Ascending aorta (tissue), 2 donors: ENCODE measurements at regions of chr6 and their contacts with region 1.

Region 1: DNA sequence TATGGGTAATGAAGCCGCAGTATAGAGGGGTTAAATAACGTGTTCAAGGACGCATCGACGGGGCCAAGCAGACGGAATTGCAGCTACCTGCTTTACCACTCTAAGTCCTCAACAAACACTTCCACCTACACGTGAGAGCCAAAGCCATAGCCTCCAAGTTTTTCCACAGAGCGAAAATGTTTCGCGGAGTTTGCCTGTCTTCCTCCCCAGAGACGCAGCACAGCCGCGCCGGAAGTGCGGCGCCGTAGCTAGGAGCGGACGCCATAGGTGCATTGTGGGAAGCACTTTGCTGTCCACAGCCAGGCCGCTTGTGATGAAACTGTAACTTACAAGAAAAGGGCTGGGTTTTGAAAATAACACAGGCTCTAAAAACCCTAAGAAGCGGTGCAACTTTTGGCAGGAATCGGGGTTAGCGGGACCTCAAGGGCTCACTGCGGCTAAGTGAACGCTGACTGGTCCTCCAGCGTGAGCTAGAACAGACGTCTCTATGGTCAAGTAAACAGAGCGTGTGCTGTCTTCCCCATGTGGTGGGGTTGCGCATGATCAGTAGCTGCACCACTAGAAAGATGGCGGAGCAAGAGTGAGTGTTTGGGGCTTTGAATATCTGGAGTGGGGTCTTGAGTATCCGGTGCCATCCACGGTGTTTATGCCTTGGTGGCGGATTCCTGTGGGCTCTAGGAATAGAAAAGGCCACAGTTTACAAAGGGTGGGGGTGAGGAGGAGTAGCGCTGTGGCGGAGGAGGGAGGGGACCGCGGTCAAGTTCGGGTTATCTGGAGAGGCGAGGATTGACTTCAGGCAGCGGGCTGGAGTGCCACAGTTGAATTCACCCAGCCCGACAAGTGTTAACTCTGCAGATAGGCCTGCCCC is at the start of gene RPL7L1:
- DNase-seq: peak; percentile 42 to 89
- H3K4me3 ChIP-seq: peak within 1 kb of the TSS; percentile 65 to 66
- H3K27ac ChIP-seq: peak within 1 kb of the TSS; percentile 85 to 95
- H3K4me1 ChIP-seq: peaks cover 5 to 18% of the 10 kb centered on the region in 2 donors
- H3K27me3 ChIP-seq: no peaks in the 10 kb centered on the region
- CTCF ChIP-seq: no peak
- total RNA-seq, gene RPL7L1: 34.8 TPM

Region 2: DNA sequence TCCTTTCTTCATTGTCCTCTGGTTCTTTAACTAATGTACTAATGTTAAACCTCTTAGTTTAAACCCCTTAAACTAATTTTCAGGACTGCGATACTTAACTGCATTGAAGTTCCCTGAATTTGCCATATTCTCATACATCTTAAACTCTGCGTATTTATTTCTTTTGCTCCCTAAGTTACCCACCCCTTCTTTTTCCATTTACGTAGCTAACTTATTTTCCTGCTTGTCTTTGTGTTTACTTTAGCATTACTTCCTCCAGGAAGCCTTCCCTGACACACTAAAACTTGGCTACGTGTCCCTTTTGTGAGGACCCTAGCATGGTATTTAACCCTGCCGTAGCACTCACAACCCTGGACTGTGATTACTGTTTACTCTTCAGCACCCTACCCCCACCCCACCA is 236.8 kb before region 1 on chr6:
- intact Hi-C with region 1: no loop called
- DNase-seq: no peak
- H3K4me3 ChIP-seq: no peak overlapping the region
- H3K27ac ChIP-seq: no peak overlapping the region
- H3K4me1 ChIP-seq: no peaks in the 10 kb centered on the region
- H3K27me3 ChIP-seq: no peaks in the 10 kb centered on the region
- CTCF ChIP-seq: no peak

Region 3: GRCh38 chr6:42661540-42662153 is 218.0 kb before region 1 on chr6:
- intact Hi-C with region 1: loop called (anchors 1 kb)
- DNase-seq: peak in 1 of 2 donors; percentile 90
- H3K4me3 ChIP-seq: no peak overlapping the region
- H3K27ac ChIP-seq: no peak overlapping the region
- H3K4me1 ChIP-seq: no peaks in the 10 kb centered on the region
- H3K27me3 ChIP-seq: no peaks in the 10 kb centered on the region
- CTCF ChIP-seq: peak; percentile 72 to 89 (median 85)

Region 4: GRCh38 chr6:42726485-42727086 is 153.0 kb before region 1 on chr6:
- intact Hi-C with region 1: loop called (anchors 2 kb)
- DNase-seq: peak; percentile 46 to 90
- H3K4me3 ChIP-seq: peak overlapping the region; percentile 53 to 70
- H3K27ac ChIP-seq: peak overlapping the region; percentile 51 to 58
- H3K4me1 ChIP-seq: peaks cover 0 to 5% of the 10 kb centered on the region in 2 donors
- H3K27me3 ChIP-seq: no peaks in the 10 kb centered on the region
- CTCF ChIP-seq: peak; percentile 80 to 89 (median 89)

Region 5: DNA sequence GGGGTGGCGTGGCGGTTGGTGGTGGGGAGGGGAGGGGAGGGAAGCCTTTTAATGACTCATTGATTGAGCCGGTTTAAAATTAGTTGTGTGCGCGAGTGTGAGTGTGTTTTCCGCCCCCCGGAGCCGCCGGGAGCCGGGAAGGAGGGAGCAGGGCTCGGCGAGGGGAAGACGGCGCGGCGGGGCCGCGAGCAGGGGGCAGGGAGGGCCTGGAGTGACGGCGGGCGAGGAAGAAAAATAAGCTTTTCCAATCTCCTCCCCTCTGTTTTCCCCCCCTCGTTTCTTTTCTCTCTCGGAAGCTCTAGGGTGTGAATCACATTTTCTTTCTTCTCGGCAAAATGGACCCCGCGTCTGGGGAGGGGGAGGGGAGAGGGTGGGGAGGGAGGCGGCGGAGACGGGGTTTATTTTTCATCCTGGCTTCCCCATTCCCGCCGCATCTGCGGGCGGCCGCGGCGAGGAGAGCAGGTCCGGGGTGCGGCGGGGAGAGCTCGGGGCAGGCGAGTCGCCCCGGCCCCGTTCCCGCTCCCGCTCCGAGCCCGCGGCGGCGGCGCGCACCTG is 96.9 kb before region 1 on chr6:
- intact Hi-C with region 1: loop called (anchors 5 kb)
- DNase-seq: peak; percentile 35 to 90
- H3K4me3 ChIP-seq: peak overlapping the region; percentile 97 to 99
- H3K27ac ChIP-seq: peak overlapping the region; percentile 99 to 100
- H3K4me1 ChIP-seq: peaks cover 4 to 29% of the 10 kb centered on the region in 2 donors
- H3K27me3 ChIP-seq: no peaks in the 10 kb centered on the region
- CTCF ChIP-seq: peak in 1 of 3 experiments; percentile 2